Activated CD4-positive, alpha-beta memory T cell treated with anti-CD3 and anti-CD28 coated beads for 36 hours (primary cell): ENCODE measurements at regions of chr5 and their contacts with region 1.

Region 1: GRCh38 chr5:59272809-59273427 is 620.6 kb downstream of the PDE4D start:
- DNase-seq: no peak
- H3K4me3 Mint-ChIP-seq: no peak overlapping the region
- H3K27ac Mint-ChIP-seq: no peak overlapping the region
- H3K4me1 Mint-ChIP-seq: peaks cover 8% of the 10 kb centered on the region
- H3K27me3 Mint-ChIP-seq: peaks cover 15% of the 10 kb centered on the region

Region 2: GRCh38 chr5:59238126-59238902 is 34.6 kb before region 1 on chr5:
- CTCF ChIA-PET with region 1: no interaction called
- POLR2A ChIA-PET with region 1: no interaction called
- intact Hi-C with region 1: loop called (anchors 2 kb)
- DNase-seq: peak; percentile 9
- H3K4me3 Mint-ChIP-seq: peak overlapping the region; percentile 7
- H3K27ac Mint-ChIP-seq: peak overlapping the region; percentile 18
- H3K4me1 Mint-ChIP-seq: peaks cover 19% of the 10 kb centered on the region
- H3K27me3 Mint-ChIP-seq: peaks cover 51% of the 10 kb centered on the region